Right ventricle myocardium superior (tissue), 1 donor: ENCODE measurements at regions of chr3 and their contacts with region 1.

Region 1: DNA sequence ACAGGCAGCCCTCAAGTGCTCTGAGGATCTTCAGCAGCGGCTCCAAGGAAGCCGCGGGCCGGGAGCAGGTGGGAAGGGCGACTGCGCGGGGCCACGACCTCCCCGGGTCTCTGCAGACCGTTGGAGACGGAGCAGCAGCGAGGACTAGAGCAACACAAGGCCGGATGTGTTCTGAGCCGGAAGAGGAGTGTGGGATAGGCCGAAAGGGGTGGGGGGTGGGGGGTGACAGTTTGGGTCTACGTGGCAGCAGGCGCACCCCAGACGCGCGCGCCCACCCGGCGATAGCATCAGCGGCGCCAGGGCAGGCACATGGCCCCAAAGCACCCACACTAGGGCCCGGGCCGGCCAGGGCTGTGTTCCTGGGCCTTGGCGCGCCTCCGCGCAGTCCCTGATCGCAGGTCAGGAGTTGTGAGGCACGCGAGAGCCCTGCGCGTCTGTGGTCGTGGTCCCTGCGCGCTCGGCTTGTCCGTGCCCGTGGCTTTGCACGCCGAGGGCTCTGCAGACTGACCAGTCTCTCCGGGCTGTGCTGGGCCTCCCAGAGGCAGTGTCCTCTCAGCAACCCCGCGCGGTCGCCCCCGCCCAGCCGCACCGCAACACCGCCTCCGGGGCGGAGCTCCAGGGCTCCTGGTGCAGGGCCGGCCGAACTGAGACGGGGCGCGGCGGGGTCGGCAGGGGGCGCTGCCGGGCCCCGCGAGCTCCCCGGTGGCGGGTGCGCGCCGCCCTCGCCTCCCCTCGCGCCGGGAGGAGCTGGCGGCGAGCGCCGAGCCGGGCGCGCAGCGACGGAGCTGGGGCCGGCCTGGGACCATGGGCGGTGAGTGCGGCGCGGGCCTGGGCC is at the start of gene PXYLP1:
- DNase-seq: peak; percentile 97
- ATAC-seq: peak; percentile 97
- total RNA-seq, gene PXYLP1: 10.8 TPM

Region 2: GRCh38 chr3:141279077-141279967 is 48.0 kb after region 1 on chr3:
- intact Hi-C with region 1: loop called (anchors 5 kb)
- DNase-seq: no peak
- ATAC-seq: peak; percentile 71

Region 3: DNA sequence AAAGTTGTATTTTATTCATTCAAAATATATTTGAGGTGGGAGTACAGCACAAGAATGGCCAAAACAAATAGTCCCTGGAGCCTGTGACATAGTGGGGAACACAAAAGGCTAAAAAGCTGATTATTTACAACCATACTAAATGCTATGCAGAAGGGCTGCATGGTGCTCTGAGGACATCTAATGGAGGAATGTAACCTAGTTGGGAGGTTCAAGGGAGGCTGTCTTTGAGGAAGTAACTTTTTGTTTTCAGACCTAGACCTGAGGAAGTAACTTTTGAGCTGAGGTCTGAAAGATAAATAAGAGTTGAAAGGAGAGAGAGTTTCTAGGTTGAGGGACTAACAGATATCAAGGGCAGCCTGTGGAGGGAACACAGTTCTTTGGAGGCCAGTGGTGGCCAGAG is 220.7 kb after region 1 on chr3:
- intact Hi-C with region 1: loop called (anchors 10 kb)
- DNase-seq: no peak
- ATAC-seq: peak; percentile 77